HEK293 (cell line): ENCODE measurements at regions of chr6 and their contacts with region 1.

Region 1: GRCh38 chr6:44237813-44238433 is 9.0 kb upstream of the HSP90AB1 start:
- H3K4me3 ChIP-seq: peak overlapping the region; percentile 61
- H3K27ac ChIP-seq: peak overlapping the region; percentile 59; the same call in 1 of the 2 replicates
- H3K4me1 ChIP-seq: peaks cover 4% of the 10 kb centered on the region; the same call in 1 of the 2 replicates
- CTCF ChIP-seq: peak; percentile 98

Region 2: DNA sequence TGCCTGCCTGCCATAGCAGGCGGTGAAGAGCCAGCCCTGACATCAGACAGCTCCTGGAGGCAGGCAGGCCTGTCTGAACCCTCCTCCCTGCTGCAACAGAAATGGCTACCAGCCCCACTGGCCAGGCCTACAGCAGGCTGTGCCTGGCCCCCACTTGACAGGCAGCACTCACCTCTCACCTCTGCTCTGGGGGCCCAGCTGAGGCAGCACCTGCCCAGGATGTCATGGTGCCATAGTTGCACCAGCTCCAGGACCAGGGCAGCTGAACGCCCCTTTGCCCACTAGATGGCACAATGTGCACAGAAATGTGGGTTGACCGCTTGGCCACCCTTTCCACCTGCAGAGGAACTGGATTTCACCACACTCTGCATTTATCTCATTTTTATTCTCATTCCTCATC is 141.3 kb before region 1 on chr6:
- CTCF ChIA-PET with region 1: interaction called, 27 read pairs
- POLR2A ChIA-PET with region 1: interaction called, 6 read pairs
- H3K4me3 ChIP-seq: no peak overlapping the region
- H3K27ac ChIP-seq: no peak overlapping the region
- H3K4me1 ChIP-seq: no peaks in the 10 kb centered on the region
- CTCF ChIP-seq: peak; percentile 88

Region 3: GRCh38 chr6:44133003-44133931 is 104.7 kb before region 1 on chr6:
- CTCF ChIA-PET with region 1: interaction called, 12 read pairs
- POLR2A ChIA-PET with region 1: no interaction called
- H3K4me3 ChIP-seq: no peak overlapping the region
- H3K27ac ChIP-seq: no peak overlapping the region
- H3K4me1 ChIP-seq: peaks cover 7% of the 10 kb centered on the region
- CTCF ChIP-seq: peak; percentile 48; the same call in 1 of the 2 replicates

Region 4: DNA sequence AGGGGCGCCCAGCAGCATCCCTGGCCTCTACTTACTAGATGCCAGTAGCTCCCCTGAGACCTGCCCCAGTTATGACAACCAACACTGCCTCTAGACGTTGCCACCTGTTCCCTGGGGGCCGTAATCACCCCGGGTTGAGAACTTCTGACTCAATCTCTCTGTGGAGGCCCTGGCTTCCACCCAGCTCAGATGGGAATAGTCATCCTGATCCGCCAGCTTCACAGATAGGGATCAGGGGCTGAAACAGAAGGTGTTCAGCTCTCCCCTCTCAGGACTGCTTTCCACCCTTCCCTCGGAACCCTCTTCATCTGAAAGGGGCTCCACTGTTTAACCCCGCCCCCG is 76.0 kb before region 1 on chr6:
- CTCF ChIA-PET with region 1: interaction called, 13 read pairs
- POLR2A ChIA-PET with region 1: no interaction called
- H3K4me3 ChIP-seq: no peak overlapping the region
- H3K27ac ChIP-seq: no peak overlapping the region
- H3K4me1 ChIP-seq: peaks cover 5% of the 10 kb centered on the region; the same call in 1 of the 2 replicates
- CTCF ChIP-seq: no peak

Region 5: DNA sequence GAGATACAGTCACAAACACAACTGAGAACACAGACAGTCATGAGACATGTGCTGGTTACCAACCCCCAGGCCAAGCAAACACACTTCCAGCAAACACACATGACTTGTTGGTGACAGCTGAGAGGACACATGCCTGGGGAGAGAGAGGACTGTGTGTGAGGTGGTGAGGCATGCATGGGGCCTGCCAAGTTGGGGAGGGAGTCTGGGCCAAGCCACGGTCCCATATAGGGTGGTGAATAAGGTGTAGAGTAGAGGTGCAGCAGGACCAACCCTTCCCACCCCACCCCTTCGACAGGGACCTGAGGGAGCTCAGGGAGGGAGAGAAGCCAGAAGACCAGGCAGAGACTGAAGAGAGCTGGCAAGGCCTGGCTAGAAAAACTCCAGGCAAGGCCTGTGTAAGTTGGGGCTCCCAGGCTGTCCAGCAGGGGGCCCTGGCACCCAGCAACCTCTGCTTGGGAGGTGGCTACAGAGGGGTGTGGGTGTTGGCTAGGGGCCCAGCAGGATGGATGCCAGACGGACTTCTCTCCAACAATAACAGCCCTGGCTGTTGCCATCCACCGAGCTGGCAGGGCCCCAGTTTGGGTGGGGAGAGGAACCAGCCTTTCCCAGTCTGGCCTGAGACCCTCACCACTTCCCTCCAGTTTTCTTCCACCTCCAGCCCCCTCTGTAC is 16.5 kb before region 1 on chr6:
- CTCF ChIA-PET with region 1: interaction called, 148 read pairs
- POLR2A ChIA-PET with region 1: interaction called, 21 read pairs
- H3K4me3 ChIP-seq: no peak overlapping the region
- H3K27ac ChIP-seq: peak overlapping the region; percentile 60
- H3K4me1 ChIP-seq: peaks cover 23% of the 10 kb centered on the region
- CTCF ChIP-seq: peak; percentile 92

Region 6: GRCh38 chr6:44257025-44257752 is 19.3 kb after region 1 on chr6 and contains the start of gene SLC35B2:
- CTCF ChIA-PET with region 1: interaction called, 20 read pairs
- POLR2A ChIA-PET with region 1: interaction called, 7 read pairs
- H3K4me3 ChIP-seq: peak within 1 kb of the TSS; percentile 82
- H3K27ac ChIP-seq: peak within 1 kb of the TSS; percentile 65; the same call in 1 of the 2 replicates
- H3K4me1 ChIP-seq: no peaks in the 10 kb centered on the region
- CTCF ChIP-seq: 0 out of 2 replicates have a peak, but pooled peaks have one; percentile 32

Region 7: DNA sequence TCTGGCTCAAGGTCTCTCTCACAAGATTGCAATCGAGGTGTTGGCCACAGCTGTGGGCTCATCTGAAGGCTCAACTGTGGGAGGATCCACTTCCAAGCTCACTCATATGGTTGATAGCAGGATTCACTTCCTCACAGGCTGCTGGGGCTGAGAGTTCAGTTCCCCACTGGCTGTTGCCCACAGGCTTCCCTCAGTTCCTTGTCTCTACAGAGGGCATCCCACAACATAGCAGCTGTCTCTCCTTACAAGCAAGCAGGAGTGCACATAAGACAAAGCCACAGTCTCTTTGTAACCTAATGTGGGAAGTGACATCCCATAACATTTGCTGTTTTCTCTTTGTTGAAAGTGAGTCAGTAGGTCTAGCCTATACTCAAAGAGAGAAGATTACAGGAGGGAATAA is 118.6 kb after region 1 on chr6:
- CTCF ChIA-PET with region 1: no interaction called
- POLR2A ChIA-PET with region 1: no interaction called
- H3K4me3 ChIP-seq: no peak overlapping the region
- H3K27ac ChIP-seq: no peak overlapping the region
- H3K4me1 ChIP-seq: peaks cover 3% of the 10 kb centered on the region; the same call in 1 of the 2 replicates
- CTCF ChIP-seq: no peak